ENCODE measurements at regions of chr3 and their contacts with region 1.

Region 1: DNA sequence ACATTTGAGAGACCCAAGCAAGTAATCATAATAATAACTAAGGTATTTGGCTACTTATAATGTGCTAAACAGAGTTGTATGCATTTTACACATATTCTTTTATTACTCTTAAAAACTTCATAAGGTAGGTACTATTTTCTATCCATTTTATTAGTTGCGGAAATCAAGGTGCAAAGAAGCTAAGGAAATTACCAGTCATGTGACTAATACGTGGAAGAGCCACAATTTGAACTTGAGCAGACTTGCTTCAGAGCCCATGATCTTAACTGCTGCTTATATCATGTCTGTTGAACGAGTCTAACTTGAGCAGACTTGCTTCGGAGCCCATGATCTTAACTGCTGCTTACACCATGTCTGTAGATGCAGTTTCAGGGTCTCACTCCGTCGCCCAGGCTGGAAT is 20.2 kb downstream of the NCBP2 start:
- DNase-seq: no peak
- CTCF ChIP-seq: no peak

Region 2: DNA sequence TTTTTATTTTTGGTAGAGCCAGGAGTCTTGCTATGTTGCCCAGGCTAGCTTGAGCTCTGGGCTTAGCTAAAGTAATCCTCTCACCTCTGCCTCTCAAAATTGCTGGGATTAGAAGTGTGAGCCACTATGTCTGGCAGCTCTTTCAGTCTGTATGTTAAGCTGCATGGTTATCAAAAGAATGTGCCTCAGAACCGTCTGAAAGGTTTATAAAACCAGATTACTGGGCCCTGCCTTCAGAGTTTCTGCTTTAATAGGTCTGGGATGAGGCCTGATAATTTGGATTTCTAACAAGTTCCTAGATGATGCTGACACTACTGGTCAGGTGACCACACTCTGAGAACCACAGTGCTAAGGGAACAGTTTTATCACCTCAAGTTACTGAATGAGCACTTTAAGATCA is 19.8 kb before region 1 on chr3:
- CTCF ChIA-PET with region 1: no interaction called
- POLR2A ChIA-PET with region 1: no interaction called
- DNase-seq: no peak
- CTCF ChIP-seq: no peak

Region 3: GRCh38 chr3:196942226-196942914 is 20.3 kb after region 1 on chr3 and contains the start of gene NCBP2:
- CTCF ChIA-PET with region 1: interaction called, 11 read pairs
- POLR2A ChIA-PET with region 1: no interaction called
- DNase-seq: peak; percentile 97
- CTCF ChIP-seq: peak; percentile 75